AG04450 (cell line): ENCODE measurements at regions of chr3 and their contacts with region 1.

Region 1: DNA sequence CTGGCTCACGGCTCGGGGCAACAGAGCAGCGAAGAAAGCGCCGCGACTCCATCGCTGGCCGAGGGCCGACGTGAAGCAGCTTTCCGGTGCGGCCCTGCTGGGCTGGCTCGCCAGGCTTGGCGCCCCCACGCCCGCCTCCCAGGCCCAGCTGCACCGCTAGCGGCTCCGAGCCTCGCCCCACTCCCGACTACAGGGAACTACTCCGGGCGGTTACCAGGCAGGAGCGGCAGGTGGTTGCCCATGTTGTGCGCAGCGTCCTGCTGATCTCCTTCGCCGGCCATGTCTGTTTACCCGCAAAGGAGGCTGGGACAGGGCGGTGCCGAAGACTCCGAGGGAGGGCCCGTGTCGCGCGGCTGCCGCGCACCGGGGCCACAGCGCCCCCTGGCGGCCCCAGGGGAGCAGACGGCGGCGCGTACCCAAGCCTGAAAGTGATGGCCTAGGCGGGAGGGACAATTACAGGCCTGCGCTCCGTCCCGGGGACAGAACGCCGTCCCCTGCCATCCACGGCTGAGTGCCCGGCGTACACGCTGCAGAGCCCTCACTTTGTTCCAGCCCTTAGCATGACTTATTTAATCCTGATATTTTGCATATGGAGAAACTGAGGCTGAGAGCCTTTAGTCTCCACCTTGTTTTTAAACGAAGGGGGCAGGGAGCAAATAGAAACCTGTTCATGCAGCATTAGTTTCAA is at the start of gene CRBN:
- DNase-seq: peak; percentile 43
- H3K4me3 ChIP-seq: peak within 1 kb of the TSS; percentile 94
- H3K27ac ChIP-seq: no peak within 1 kb of the TSS
- H3K27me3 ChIP-seq: no peaks in the 10 kb centered on the region
- CTCF ChIP-seq: peak; percentile 91
- polyA plus RNA-seq, gene CRBN: 30.7 and 44.2 TPM in 2 replicates

Region 2: DNA sequence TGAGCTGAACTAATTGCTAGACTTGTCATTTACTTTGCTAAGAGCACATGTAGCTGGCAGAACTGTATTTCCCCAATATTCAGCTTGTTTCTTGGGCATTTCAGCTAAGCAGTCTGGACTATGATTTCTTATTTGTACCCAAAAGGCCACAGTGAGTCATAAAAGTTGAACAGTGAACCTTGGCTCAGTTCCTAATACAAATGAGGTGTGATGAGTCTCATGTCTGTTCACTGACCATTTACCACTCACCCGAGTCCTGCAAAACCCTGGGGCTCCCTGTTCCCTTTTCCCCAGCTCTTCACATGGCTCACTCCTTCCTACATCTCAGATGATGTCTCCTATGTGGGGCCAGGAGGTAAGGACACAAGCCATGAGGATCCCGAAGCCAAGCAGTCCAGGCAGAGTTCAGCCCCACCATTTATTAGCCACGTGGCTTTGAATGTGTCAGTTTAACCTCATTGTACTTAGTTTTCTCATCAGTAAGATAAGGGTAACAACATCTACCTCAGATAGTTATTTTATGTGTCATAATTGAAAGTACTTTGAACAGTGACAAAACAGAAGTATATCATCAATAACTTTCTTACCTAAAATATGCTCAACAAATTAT is 308.7 kb before region 1 on chr3:
- CTCF ChIA-PET with region 1: no interaction called
- POLR2A ChIA-PET with region 1: no interaction called
- DNase-seq: no peak
- H3K4me3 ChIP-seq: no peak overlapping the region
- H3K27ac ChIP-seq: no peak overlapping the region
- H3K27me3 ChIP-seq: no peaks in the 10 kb centered on the region
- CTCF ChIP-seq: no peak

Region 3: DNA sequence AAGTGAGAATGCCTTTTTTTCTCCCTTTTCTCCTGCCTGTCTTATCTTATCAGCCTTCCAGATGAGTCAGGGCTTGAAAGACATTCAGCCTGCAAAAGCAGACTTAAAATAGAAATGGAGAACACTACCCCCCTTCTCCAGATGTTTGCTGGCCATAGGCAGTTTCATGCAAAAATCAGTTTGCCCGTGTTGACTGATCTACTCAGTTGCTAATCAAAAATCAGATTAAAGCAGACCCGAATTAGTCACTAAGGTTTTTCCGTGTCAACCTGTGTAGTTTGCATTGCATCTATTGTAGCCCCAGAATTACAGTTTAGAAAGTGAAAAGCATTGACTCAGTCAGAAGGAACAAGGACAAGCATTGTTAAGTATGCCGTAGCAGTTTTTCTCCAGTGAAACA is 125.6 kb before region 1 on chr3:
- CTCF ChIA-PET with region 1: no interaction called
- POLR2A ChIA-PET with region 1: no interaction called
- DNase-seq: no peak
- H3K4me3 ChIP-seq: no peak overlapping the region
- H3K27ac ChIP-seq: no peak overlapping the region
- H3K27me3 ChIP-seq: no peaks in the 10 kb centered on the region
- CTCF ChIP-seq: no peak

Region 4: GRCh38 chr3:3082234-3082924 is 97.2 kb before region 1 on chr3:
- CTCF ChIA-PET with region 1: no interaction called
- POLR2A ChIA-PET with region 1: no interaction called
- DNase-seq: no peak
- H3K4me3 ChIP-seq: no peak overlapping the region
- H3K27ac ChIP-seq: no peak overlapping the region
- H3K27me3 ChIP-seq: no peaks in the 10 kb centered on the region
- CTCF ChIP-seq: no peak

Region 5: GRCh38 chr3:3191675-3192285 is 12.2 kb after region 1 on chr3:
- CTCF ChIA-PET with region 1: interaction called, 10 read pairs
- POLR2A ChIA-PET with region 1: no interaction called
- DNase-seq: no peak
- H3K4me3 ChIP-seq: no peak overlapping the region
- H3K27ac ChIP-seq: no peak overlapping the region
- H3K27me3 ChIP-seq: no peaks in the 10 kb centered on the region
- CTCF ChIP-seq: no peak